ENCODE measurements at regions of chr16 and their contacts with region 1.

Region 1: GRCh38 chr16:2799866-2800239 is 1.6 kb downstream of the PRSS41 start:
- DNase-seq: no peak
- ATAC-seq: no peak
- H3K4me3 ChIP-seq: no peak overlapping the region
- H3K27ac ChIP-seq: no peak overlapping the region
- H3K4me1 ChIP-seq: no peaks in the 10 kb centered on the region
- H3K27me3 ChIP-seq: no peaks in the 10 kb centered on the region; a peak in 1 of 4 replicates
- CTCF ChIP-seq: no peak
- EP300 ChIP-seq: no peak
- POLR2A ChIP-seq: no peak
- RAD21 ChIP-seq: no peak

Region 2: GRCh38 chr16:2854700-2855309 is 55.0 kb after region 1 on chr16:
- CTCF ChIA-PET with region 1: no interaction called
- POLR2A ChIA-PET with region 1: no interaction called
- RAD21 ChIA-PET with region 1: no interaction called
- SMC1A ChIA-PET with region 1: no interaction called
- in situ Hi-C with region 1: no loop called
- intact Hi-C with region 1: loop called (anchors 10 kb)
- DNase-seq: no peak
- ATAC-seq: no peak
- H3K4me3 ChIP-seq: no peak overlapping the region
- H3K27ac ChIP-seq: no peak overlapping the region
- H3K4me1 ChIP-seq: no peaks in the 10 kb centered on the region
- H3K27me3 ChIP-seq: no peaks in the 10 kb centered on the region; a peak in 1 of 4 replicates
- CTCF ChIP-seq: peak in 2 of 3 experiments; percentile 39 to 48; a peak in 3 of 6 replicates
- EP300 ChIP-seq: no peak
- POLR2A ChIP-seq: no peak
- RAD21 ChIP-seq: no peak

Measured in GM12878 (cell line).